WTC11 (cell line): ENCODE measurements at regions of chr17 and their contacts with region 1.

Region 1: GRCh38 chr17:35808962-35809854 is at the start of gene TAF15:
- DNase-seq: peak; percentile 97
- ATAC-seq: peak; percentile 90
- H3K4me3 Mint-ChIP-seq: peak within 1 kb of the TSS; percentile 99
- H3K27ac Mint-ChIP-seq: peak within 1 kb of the TSS; percentile 99
- H3K4me1 Mint-ChIP-seq: peaks cover 36% of the 10 kb centered on the region
- H3K27me3 Mint-ChIP-seq: no peaks in the 10 kb centered on the region
- CTCF ChIP-seq: no peak
- total RNA-seq, gene TAF15: 273 to 322 TPM (median 316 TPM) in 3 replicates

Region 2: DNA sequence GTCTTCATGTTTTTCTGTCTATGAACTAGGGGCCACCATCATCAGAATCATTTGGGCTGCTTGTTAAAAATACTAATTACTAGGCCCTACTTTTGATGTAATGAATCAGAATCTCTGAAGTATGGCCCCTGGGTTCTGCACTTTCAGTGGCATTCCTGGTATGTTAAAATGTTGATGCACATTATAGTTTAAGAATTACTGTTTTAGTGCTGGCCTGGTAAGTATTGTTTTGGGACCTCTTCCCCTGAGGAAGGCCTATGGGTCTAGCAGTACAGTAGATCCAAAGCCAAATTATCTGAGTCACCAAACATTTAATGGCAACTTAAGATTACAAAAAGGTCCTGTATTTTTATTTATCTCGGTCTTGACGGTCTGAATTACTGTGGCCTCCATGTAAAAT is 163.3 kb before region 1 on chr17:
- CTCF ChIA-PET with region 1: no interaction called
- POLR2A ChIA-PET with region 1: no interaction called
- DNase-seq: no peak
- ATAC-seq: no peak
- H3K4me3 Mint-ChIP-seq: no peak overlapping the region
- H3K27ac Mint-ChIP-seq: peak overlapping the region; percentile 86
- H3K4me1 Mint-ChIP-seq: no peaks in the 10 kb centered on the region
- H3K27me3 Mint-ChIP-seq: no peaks in the 10 kb centered on the region
- CTCF ChIP-seq: no peak

Region 3: DNA sequence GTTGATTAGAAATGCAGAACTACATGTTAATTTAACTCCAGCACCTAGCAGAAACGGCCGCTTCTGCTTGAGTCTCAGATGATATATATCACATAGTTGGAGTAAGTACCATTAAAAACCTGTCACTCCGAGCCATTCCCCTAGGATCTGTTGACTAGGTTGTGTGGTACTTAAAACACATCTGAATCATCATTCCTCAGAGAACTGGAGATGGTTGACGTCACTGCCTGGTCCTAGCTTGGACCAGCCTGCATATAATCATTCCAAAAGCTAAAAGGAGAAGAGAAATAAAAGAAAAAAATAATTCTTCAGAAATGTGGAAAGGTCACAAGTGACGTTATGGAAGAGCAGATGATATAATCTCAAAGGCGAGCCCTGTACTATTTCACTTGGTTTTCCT is 109.1 kb before region 1 on chr17:
- CTCF ChIA-PET with region 1: no interaction called
- POLR2A ChIA-PET with region 1: no interaction called
- DNase-seq: no peak
- ATAC-seq: no peak
- H3K4me3 Mint-ChIP-seq: no peak overlapping the region
- H3K27ac Mint-ChIP-seq: no peak overlapping the region
- H3K4me1 Mint-ChIP-seq: peaks cover 15% of the 10 kb centered on the region
- H3K27me3 Mint-ChIP-seq: no peaks in the 10 kb centered on the region
- CTCF ChIP-seq: no peak

Region 4: GRCh38 chr17:35731239-35731931 is 77.8 kb before region 1 on chr17 and contains the start of gene RASL10B:
- CTCF ChIA-PET with region 1: interaction called, 13 read pairs
- POLR2A ChIA-PET with region 1: interaction called, 7 read pairs
- DNase-seq: peak; percentile 80
- ATAC-seq: peak; percentile 75
- H3K4me3 Mint-ChIP-seq: peak within 1 kb of the TSS; percentile 85
- H3K27ac Mint-ChIP-seq: no peak within 1 kb of the TSS
- H3K4me1 Mint-ChIP-seq: peaks cover 39% of the 10 kb centered on the region
- H3K27me3 Mint-ChIP-seq: peaks cover 16% of the 10 kb centered on the region
- CTCF ChIP-seq: no peak
- total RNA-seq, gene RASL10B: 17.4 to 25.4 TPM (median 25.3 TPM) in 3 replicates

Region 5: DNA sequence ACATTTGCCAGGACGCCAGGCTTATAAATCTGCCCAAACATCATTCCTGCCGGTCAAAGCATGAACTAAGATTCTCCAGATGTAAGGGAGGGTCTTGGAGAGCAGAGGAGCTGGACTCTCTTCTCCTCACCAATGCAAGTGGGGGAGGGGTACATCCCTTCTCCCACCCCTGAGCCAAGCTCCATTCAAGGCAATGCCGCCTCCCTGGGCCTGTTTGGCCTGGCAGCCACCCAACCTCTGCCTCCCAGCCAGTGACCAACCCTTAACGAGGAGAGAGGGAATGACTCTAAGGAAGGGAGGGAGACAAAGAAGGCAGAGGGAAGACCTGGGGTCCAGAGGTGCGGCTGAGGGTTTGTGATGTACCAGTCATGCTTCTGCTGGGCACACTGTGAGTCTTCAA is 34.7 kb before region 1 on chr17:
- CTCF ChIA-PET with region 1: interaction called, 17 read pairs
- POLR2A ChIA-PET with region 1: interaction called, 3 read pairs
- DNase-seq: no peak
- ATAC-seq: no peak; the same call in 1 of the 2 replicates
- H3K4me3 Mint-ChIP-seq: no peak overlapping the region
- H3K27ac Mint-ChIP-seq: no peak overlapping the region
- H3K4me1 Mint-ChIP-seq: peaks cover 33% of the 10 kb centered on the region
- H3K27me3 Mint-ChIP-seq: no peaks in the 10 kb centered on the region
- CTCF ChIP-seq: no peak

Region 6: DNA sequence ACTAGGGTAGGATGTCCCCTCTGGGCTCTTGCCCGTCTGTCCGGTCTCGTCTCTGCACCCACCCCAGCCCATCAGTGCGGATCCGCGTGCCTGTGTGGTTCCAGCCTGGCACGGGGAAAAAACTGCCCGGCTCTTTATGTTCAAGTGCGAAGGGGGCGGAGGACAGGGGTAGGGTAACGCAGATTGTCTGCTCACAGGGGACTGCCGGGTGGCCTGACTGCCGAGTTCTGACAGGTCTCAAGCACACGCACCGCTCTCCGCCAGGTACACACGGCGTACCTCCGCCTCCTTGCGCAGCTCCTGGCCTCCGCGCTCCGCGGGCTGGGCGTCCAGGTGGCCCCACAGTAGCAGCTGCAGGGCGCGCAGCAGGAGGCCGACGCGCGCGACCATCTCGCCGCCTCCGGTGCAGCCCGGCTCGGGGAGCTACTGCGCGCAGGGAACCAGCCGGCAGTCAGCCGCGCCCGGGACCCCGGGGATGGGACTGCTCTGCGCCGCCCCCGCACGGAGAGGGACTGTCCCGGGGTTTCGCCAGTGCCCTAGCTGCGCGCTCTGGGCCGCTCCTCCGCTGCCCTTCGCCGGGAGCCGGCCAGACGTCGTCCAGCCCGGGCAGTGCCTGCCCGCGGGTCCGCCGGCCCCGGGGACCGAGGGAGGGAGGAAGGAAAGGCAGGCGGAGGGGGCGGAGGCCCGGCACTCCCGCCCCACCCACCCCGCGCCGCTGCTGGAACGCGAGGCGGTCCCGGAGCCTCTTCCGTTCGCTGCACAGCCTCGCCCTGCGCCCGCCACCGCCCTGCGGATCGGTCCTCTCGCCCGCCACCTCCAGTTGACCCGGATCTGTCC is 14.0 kb before region 1 on chr17 and contains the start of gene MMP28:
- CTCF ChIA-PET with region 1: interaction called, 16 read pairs
- POLR2A ChIA-PET with region 1: interaction called, 4 read pairs
- DNase-seq: peak; percentile 61
- ATAC-seq: peak; percentile 72
- H3K4me3 Mint-ChIP-seq: peak within 1 kb of the TSS; percentile 67
- H3K27ac Mint-ChIP-seq: no peak within 1 kb of the TSS
- H3K4me1 Mint-ChIP-seq: peaks cover 10% of the 10 kb centered on the region
- H3K27me3 Mint-ChIP-seq: peaks cover 78% of the 10 kb centered on the region
- CTCF ChIP-seq: no peak
- total RNA-seq, gene MMP28: 0.22 TPM in 1 of 3 replicates, not detected in the others